ENCODE measurements at regions of chr12 and their contacts with region 1.

Region 1: GRCh38 chr12:113422030-113422885 is at the start of gene SDSL:
- DNase-seq: peak; percentile 68
- ATAC-seq: peak; percentile 89
- total RNA-seq, gene SDSL: 7.6 TPM

Region 2: DNA sequence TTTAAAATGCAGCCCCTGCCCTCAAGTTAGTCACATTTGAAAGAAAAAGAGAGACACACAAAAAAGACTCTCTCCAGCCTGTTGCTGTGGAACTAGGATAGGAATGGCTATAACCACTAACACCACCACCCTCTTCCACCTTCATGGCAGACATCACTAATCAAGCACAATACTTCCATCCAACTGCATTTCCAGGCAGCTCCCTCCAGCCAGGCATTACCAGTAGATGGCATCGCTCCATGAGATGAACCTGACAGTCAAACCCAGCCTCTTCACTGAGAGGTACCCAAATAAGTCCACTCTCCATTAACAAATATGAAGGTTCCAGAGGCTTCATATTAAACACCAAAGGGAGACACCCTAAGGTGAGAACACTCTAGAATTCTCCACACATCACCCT is 111.8 kb before region 1 on chr12:
- intact Hi-C with region 1: loop called (anchors 10 kb)
- DNase-seq: no peak
- ATAC-seq: no peak

Region 3: DNA sequence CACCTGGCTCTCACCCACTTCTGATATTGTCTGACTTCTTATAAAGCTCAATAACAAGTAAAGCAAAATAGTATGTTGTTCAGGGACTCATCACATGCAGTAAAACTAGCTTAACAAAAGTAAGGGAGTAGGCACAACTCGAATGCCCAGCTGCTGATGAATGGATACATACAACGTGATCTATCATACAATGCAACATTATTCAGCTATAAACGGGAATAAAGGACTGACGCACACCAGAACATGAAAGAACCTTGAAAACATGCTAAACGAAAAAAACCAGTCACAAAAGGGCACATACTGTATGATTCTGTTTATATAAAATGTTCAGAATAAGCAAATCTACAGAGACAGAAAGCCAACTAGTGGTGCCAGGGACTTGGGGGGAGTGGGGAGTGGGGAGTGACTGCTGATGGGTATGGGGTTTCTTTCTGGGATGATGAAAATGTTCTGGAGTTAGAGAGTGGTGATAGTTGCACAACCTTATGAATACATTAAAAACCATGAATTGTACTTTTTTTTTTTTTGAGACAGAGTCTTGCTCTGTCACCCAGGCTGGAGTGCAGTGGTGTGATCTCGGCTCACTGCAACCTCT is 52.8 kb before region 1 on chr12:
- intact Hi-C with region 1: no loop called
- DNase-seq: no peak
- ATAC-seq: no peak

Region 4: GRCh38 chr12:113685179-113685782 is 263.0 kb after region 1 on chr12:
- intact Hi-C with region 1: no loop called
- DNase-seq: no peak
- ATAC-seq: no peak

Measured in left ventricle myocardium superior (tissue), 1 donor.